Activated CD8-positive, alpha-beta T cell treated with anti-CD3 and anti-CD28 coated beads for 36 hours (primary cell): ENCODE measurements at regions of chr16 and their contacts with region 1.

Region 1: DNA sequence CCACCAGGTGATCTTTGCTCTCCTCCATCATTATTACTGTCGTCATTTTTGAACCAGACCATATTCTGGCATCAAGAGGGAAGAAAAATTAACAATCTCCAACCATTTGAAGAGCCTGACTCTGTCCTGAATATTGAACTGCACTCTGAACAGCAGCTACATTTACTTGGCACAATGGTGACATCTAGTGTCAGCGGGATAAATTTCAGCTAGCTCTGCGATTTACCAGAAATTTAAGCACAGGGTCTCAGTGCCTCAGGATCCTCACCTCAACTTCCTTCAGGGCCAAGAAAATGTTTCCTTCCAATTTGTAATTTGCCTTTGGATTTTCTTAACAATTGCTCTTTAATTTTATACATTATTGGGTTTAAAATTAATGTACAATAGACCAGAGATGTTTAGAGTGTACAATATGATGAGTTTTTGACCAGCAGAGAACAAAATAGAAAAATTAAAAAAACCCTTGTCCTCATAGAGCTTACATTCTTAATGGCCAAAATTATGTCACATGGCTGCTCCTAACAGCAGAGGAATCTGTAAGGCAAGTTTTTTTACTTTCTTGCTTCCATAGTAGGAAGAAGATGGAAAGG is 10.7 kb upstream of the ZNF19 start:
- DNase-seq: peak; percentile 67
- ATAC-seq: peak; percentile 79
- H3K4me3 Mint-ChIP-seq: no peak overlapping the region
- H3K27ac Mint-ChIP-seq: no peak overlapping the region
- H3K4me1 Mint-ChIP-seq: no peaks in the 10 kb centered on the region
- H3K27me3 Mint-ChIP-seq: peaks cover 1% of the 10 kb centered on the region
- CTCF ChIP-seq: peak; percentile 80

Region 2: DNA sequence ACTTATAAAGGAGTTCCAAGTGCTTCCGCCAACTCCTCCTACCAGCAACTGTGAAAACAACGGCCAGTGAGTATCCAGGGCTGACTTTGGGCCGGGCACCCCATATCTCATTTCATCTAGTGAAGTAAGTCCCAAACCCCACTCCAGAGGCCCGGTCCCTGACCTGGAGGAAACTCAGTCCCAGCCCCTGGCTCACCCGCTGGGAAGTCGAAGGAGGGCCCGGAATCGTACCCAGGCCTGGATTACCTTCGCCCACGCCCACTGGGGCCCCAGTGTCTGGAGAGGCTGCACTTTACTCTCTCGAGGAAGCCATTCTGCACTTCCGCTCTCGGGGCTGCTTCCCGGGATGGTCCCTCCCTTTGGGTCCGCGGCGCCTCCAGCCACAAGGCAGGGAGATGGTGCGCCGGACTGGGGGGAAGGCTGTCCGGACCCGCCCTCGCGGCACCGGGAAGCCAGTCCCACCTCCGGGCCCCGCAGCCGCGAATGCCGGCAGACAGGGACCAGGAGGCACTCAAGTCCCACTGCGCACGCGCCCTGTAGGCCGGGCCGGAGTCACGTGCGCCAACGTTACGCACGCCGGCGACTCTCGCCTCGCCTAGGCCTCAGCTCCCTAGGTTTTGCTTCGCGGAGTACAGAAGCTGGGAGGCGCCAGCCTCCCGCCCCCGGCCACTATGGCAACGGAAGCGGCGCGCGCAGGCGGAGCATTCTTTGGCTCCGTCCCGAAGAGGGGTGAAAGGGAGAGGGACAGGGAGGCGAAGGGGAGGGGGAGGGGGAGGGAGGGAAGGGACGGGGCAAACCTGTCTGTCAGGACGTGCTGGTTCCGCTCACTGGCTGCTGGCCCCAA is 210.8 kb before region 1 on chr16 and contains the start of gene CMTR2:
- CTCF ChIA-PET with region 1: no interaction called
- POLR2A ChIA-PET with region 1: no interaction called
- intact Hi-C with region 1: no loop called
- DNase-seq: peak; percentile 93
- ATAC-seq: peak; percentile 97
- H3K4me3 Mint-ChIP-seq: peak within 1 kb of the TSS; percentile 90
- H3K27ac Mint-ChIP-seq: peak within 1 kb of the TSS; percentile 93
- H3K4me1 Mint-ChIP-seq: peaks cover 14% of the 10 kb centered on the region
- H3K27me3 Mint-ChIP-seq: peaks cover 18% of the 10 kb centered on the region
- CTCF ChIP-seq: no peak
- total RNA-seq, gene CMTR2: 16.6 to 19.3 TPM

Region 3: GRCh38 chr16:71440669-71441347 is 59.1 kb before region 1 on chr16:
- CTCF ChIA-PET with region 1: interaction called, 12 read pairs
- POLR2A ChIA-PET with region 1: interaction called, 3 read pairs
- intact Hi-C with region 1: no loop called
- DNase-seq: peak; percentile 52
- ATAC-seq: no peak
- H3K4me3 Mint-ChIP-seq: no peak overlapping the region
- H3K27ac Mint-ChIP-seq: no peak overlapping the region
- H3K4me1 Mint-ChIP-seq: no peaks in the 10 kb centered on the region
- H3K27me3 Mint-ChIP-seq: peaks cover 13% of the 10 kb centered on the region
- CTCF ChIP-seq: no peak

Region 4: GRCh38 chr16:71461686-71462648 is 37.9 kb before region 1 on chr16 and contains the start of gene ZNF23:
- CTCF ChIA-PET with region 1: interaction called, 23 read pairs
- POLR2A ChIA-PET with region 1: interaction called, 4 read pairs
- intact Hi-C with region 1: no loop called
- DNase-seq: peak; percentile 80
- ATAC-seq: peak; percentile 99
- H3K4me3 Mint-ChIP-seq: peak within 1 kb of the TSS; percentile 80
- H3K27ac Mint-ChIP-seq: peak within 1 kb of the TSS; percentile 94
- H3K4me1 Mint-ChIP-seq: peaks cover 22% of the 10 kb centered on the region
- H3K27me3 Mint-ChIP-seq: no peaks in the 10 kb centered on the region
- CTCF ChIP-seq: peak; percentile 32
- total RNA-seq, gene ZNF23: 10.4 to 11.1 TPM

Region 5: DNA sequence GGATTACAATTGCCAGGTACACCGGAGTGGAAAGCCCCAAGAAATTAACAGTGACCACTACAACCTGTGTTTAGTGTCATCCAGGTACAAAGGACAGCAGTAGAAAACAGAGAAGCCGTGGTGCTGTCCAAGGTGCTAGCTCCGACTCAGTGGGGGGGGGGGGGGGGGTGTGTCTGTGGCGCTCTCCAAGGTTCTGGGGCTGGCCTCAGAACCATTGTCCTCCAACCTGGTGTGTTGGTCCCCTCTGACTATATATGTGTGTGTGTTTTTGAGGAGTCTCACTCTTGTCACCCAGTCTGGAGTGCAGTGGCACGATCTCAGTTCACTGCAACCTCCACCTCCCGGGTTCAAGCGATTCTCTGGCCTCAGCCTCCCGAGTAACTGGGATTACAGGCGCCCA is 32.1 kb before region 1 on chr16:
- CTCF ChIA-PET with region 1: interaction called, 23 read pairs
- POLR2A ChIA-PET with region 1: no interaction called
- intact Hi-C with region 1: no loop called
- DNase-seq: peak; percentile 45
- ATAC-seq: peak; percentile 68
- H3K4me3 Mint-ChIP-seq: no peak overlapping the region
- H3K27ac Mint-ChIP-seq: no peak overlapping the region
- H3K4me1 Mint-ChIP-seq: peaks cover 5% of the 10 kb centered on the region
- H3K27me3 Mint-ChIP-seq: no peaks in the 10 kb centered on the region
- CTCF ChIP-seq: no peak

Region 6: GRCh38 chr16:71474864-71475263 is 25.0 kb before region 1 on chr16:
- CTCF ChIA-PET with region 1: interaction called, 11 read pairs
- POLR2A ChIA-PET with region 1: no interaction called
- intact Hi-C with region 1: no loop called
- DNase-seq: no peak
- ATAC-seq: no peak
- H3K4me3 Mint-ChIP-seq: no peak overlapping the region
- H3K27ac Mint-ChIP-seq: no peak overlapping the region
- H3K4me1 Mint-ChIP-seq: no peaks in the 10 kb centered on the region
- H3K27me3 Mint-ChIP-seq: no peaks in the 10 kb centered on the region
- CTCF ChIP-seq: no peak

Region 7: DNA sequence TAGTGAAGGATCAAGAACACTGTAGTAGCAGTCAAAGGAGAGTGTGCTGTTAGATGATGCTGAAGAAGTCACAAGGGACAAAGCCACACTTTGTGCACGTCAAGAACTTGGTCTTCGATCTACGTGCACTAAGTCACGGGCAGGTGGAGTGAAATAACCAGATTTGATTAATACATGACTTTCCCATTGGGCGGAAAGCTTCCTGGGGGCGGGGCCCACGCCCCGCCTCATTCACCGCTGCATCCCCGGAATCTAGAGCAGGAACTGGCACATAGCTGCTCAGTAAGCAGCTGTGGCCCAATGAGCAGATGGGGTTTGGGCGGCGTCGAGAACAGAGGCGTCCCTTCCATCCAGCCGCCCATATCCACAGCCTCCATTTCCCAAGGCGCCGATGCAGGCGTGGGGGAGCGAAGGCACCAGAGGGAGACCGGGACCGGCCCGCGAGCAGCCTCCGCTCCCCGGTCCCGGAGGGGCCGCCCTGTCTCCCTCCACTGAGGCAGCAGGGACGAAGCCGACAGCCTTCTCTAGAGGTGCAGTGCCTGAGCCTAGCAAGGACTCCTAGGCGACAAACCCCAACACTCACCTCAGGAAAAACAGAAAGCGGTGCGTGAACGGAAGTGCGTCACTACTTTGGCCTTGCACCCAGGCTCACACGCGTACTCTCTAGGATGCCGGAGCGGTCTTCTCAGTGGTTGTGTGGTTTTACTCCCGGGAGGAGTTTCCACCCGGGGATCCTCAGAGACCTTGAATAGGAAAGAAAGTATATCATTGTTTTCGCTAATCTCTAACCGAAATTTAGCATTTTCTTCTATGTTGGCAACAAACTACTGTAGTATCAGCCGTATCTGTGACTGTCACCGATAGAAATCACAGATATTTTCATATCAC is 15.6 kb before region 1 on chr16:
- CTCF ChIA-PET with region 1: interaction called, 19 read pairs
- POLR2A ChIA-PET with region 1: no interaction called
- intact Hi-C with region 1: no loop called
- DNase-seq: peak; percentile 93
- ATAC-seq: peak; percentile 90
- H3K4me3 Mint-ChIP-seq: peak overlapping the region; percentile 76
- H3K27ac Mint-ChIP-seq: peak overlapping the region; percentile 79
- H3K4me1 Mint-ChIP-seq: peaks cover 13% of the 10 kb centered on the region
- H3K27me3 Mint-ChIP-seq: no peaks in the 10 kb centered on the region
- CTCF ChIP-seq: no peak

Region 8: GRCh38 chr16:71537643-71538042 is 37.8 kb after region 1 on chr16:
- CTCF ChIA-PET with region 1: interaction called, 10 read pairs
- POLR2A ChIA-PET with region 1: no interaction called
- intact Hi-C with region 1: no loop called
- DNase-seq: peak; percentile 69
- ATAC-seq: peak; percentile 76
- H3K4me3 Mint-ChIP-seq: no peak overlapping the region
- H3K27ac Mint-ChIP-seq: no peak overlapping the region
- H3K4me1 Mint-ChIP-seq: no peaks in the 10 kb centered on the region
- H3K27me3 Mint-ChIP-seq: peaks cover 4% of the 10 kb centered on the region
- CTCF ChIP-seq: peak; percentile 49